Astrocyte of the cerebellum (primary cell): ENCODE measurements at regions of chr15 and their contacts with region 1.

Region 1: DNA sequence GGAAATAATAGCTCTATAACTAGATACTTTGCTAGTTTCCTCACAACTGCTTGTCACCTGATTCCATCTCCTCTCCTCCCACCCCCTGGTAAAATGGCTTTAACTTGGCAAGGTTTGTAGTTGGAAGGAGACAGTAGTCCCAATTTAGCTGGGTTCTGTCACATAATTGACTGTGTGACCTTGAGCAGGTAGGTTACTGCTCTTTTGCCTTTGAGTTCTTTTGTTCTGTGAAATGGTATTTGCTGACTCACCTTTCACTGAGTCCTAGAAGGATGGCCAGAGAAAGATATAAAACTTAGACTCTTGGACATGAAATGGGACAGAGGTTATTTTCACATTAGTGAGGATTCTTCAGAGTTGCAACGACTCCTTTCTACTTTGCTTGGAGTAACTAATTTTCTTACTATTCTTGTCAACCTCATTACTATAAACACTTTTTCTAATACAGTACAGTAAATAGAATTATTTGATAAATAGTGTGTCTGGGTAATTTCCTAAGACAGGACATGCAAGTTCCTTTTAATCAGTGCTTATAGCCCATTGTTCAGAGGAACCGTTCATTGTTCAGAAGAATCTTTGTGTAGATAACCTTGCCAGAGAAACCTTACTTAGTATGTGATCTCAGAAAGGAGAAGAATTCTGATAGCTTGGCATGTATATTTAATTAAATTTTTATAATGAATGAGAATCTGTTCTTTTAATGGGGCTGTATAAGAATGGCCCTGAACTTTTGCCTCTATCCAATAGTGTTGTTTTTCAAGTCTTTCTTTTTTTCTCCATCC is 14.3 kb downstream of the AKAP13 start:
- DNase-seq: no peak
- H3K4me3 ChIP-seq: no peak overlapping the region
- CTCF ChIP-seq: no peak

Region 2: GRCh38 chr15:85296615-85297402 is 97.9 kb before region 1 on chr15:
- in situ Hi-C with region 1: loop called (anchors 5 kb)
- DNase-seq: peak; percentile 64
- H3K4me3 ChIP-seq: no peak overlapping the region
- CTCF ChIP-seq: peak; percentile 80

Region 3: GRCh38 chr15:85312486-85312885 is 82.3 kb before region 1 on chr15:
- in situ Hi-C with region 1: no loop called
- DNase-seq: no peak
- H3K4me3 ChIP-seq: no peak overlapping the region
- CTCF ChIP-seq: no peak